Activated CD4-positive, alpha-beta memory T cell treated with anti-CD3 and anti-CD28 coated beads for 36 hours (primary cell): ENCODE measurements at regions of chr11 and their contacts with region 1.

Region 1: DNA sequence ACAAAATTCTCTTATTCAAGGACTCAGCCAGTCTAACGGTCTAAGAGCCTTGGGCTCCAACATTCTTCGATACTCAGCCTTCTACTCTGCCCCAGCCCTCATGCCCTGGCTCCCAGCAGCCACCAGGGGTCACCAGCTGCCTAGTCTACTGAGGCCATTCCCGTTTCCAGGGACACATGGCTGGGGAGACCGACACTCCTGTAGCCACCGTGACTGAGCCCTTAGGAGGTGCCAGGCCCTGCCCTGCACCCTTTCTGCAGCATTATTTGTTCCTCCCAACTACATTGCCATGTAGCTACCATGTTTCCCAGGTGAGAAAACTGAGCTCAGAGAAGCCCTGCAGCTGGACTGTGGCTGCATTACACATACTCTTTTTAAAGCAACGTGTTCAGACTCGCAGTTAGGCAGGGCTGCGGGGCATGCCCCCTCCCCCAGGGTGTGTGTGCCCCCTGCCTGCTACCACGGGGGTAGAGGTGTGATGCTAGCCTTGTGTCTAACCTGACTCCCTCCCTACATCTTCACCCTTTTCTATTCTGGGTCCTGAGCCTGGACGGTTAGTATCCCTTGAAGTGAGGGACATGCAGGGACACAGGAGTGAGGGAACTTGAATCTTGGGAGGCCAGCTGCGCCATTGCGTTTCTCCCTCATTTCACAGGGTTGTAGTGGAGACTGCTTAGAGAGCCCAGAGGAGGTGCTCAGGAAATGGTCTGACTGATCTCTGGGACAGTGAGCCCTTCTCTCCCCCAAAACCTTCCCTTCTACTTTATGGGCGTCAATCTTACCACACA is 17.5 kb downstream of the ATG16L2 start:
- DNase-seq: peak; percentile 69
- H3K4me3 Mint-ChIP-seq: no peak overlapping the region
- H3K27ac Mint-ChIP-seq: peak overlapping the region; percentile 18
- H3K4me1 Mint-ChIP-seq: peaks cover 16% of the 10 kb centered on the region
- H3K27me3 Mint-ChIP-seq: no peaks in the 10 kb centered on the region

Region 2: DNA sequence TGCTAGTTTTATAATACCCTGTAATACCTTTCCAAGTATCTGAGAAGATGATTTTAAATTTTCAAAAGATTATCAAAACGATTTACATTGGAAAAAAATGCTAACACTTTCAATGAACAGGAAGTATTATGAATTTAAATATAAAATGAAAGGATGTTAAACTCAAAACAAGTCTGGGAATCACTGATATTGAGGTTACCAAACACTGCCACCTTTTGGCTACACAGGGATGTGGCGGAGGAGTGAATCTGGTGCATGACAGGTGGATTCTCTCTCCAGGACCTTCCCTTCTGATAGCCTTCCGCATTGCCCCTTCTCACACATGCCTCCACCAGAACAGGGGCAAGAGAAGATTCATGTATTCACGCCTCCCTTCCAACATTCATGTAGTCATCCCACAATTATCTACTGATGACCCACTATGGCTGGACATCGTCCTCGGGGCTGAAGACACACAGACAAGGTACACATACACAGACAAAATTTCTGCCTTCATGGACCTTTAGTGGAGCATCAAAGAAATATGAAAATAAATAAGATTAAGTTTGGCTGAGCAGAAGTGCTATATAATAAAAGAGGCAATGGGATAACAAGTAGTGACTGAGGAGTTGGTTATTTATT is 17.2 kb after region 1 on chr11:
- CTCF ChIA-PET with region 1: interaction called, 13 read pairs
- POLR2A ChIA-PET with region 1: no interaction called
- intact Hi-C with region 1: no loop called
- DNase-seq: peak; percentile 57
- H3K4me3 Mint-ChIP-seq: no peak overlapping the region
- H3K27ac Mint-ChIP-seq: no peak overlapping the region
- H3K4me1 Mint-ChIP-seq: peaks cover 9% of the 10 kb centered on the region
- H3K27me3 Mint-ChIP-seq: no peaks in the 10 kb centered on the region